Caco-2 (cell line): ENCODE measurements at regions of chr6 and their contacts with region 1.

Region 1: GRCh38 chr6:110482774-110483398 is 6.5 kb upstream of the SLC22A16 start:
- DNase-seq: no peak
- H3K4me3 ChIP-seq: no peak overlapping the region
- H3K4me3 Mint-ChIP-seq: no peak overlapping the region
- H3K27ac Mint-ChIP-seq: no peak overlapping the region
- H3K4me1 ChIP-seq: no peaks in the 10 kb centered on the region
- H3K4me1 Mint-ChIP-seq: peaks cover 15% of the 10 kb centered on the region
- H3K27me3 ChIP-seq: no peaks in the 10 kb centered on the region
- H3K27me3 Mint-ChIP-seq: no peaks in the 10 kb centered on the region
- CTCF ChIP-seq: no peak

Region 2: DNA sequence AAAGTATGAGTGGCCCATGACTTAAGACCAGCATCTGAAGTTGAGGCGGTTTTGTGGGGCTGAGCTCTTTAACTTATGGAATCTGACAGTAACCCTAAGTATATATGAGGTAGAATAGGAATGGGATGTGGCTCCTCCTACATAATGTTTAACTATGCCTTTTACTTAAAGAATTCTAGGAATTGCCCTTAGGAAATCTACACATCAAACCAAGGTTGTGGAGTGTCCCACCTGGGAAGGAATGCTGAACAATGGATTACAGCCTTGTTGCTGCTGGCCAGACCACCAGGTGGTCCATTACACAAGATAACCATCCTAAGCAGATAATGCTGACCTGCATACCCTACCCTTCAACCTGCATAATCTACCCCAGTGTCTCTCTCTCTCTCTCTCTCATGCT is 28.5 kb after region 1 on chr6:
- CTCF ChIA-PET with region 1: no interaction called
- POLR2A ChIA-PET with region 1: no interaction called
- intact Hi-C with region 1: loop called (anchors 2 kb)
- DNase-seq: peak; percentile 52 to 68
- H3K4me3 ChIP-seq: no peak overlapping the region
- H3K4me3 Mint-ChIP-seq: no peak overlapping the region
- H3K27ac Mint-ChIP-seq: peak overlapping the region; percentile 63
- H3K4me1 ChIP-seq: peaks cover 36% of the 10 kb centered on the region
- H3K4me1 Mint-ChIP-seq: peaks cover 25% of the 10 kb centered on the region
- H3K27me3 ChIP-seq: no peaks in the 10 kb centered on the region
- H3K27me3 Mint-ChIP-seq: no peaks in the 10 kb centered on the region
- CTCF ChIP-seq: no peak